H1 (cell line): ENCODE measurements at regions of chr12 and their contacts with region 1.

Region 1: DNA sequence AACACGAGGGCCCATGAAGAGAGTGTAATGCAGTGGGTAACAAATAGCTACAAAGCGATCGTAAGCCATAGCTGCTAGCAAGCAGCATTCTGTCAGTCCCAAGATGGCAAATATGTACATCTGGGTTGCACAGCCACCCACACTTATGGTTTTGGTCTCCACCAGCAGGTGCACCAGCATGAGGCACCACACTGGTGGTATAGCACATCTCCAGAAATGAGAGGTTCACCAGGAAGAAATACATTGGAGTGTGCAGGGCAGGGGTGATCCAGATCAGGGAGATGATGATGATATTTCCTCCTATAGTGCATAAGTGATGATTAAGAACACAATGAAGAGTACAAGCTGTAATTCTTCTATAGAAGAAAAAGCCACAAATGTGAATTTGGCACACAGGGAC is 26.4 kb upstream of the OR10A7 start:
- DNase-seq: no peak
- H3K4me3 ChIP-seq: no peak overlapping the region
- H3K27ac ChIP-seq: no peak overlapping the region
- H3K4me1 ChIP-seq: no peaks in the 10 kb centered on the region
- H3K27me3 ChIP-seq: no peaks in the 10 kb centered on the region
- CTCF ChIP-seq: no peak
- EP300 ChIP-seq: no peak
- POLR2A ChIP-seq: no peak
- RAD21 ChIP-seq: no peak

Region 2: GRCh38 chr12:54993161-54993835 is 201.1 kb before region 1 on chr12:
- CTCF ChIA-PET with region 1: no interaction called
- POLR2A ChIA-PET with region 1: no interaction called
- DNase-seq: peak in 1 of 2 experiments; percentile 55
- H3K4me3 ChIP-seq: no peak overlapping the region
- H3K27ac ChIP-seq: no peak overlapping the region
- H3K4me1 ChIP-seq: peaks cover 1 to 11% (median 7%) of the 10 kb centered on the region in 4 experiments; a peak in 5 of 7 replicates
- H3K27me3 ChIP-seq: no peaks in the 10 kb centered on the region
- CTCF ChIP-seq: peak in 2 of 3 experiments; percentile 75 to 88; a peak in 3 of 4 replicates
- EP300 ChIP-seq: no peak
- POLR2A ChIP-seq: no peak
- RAD21 ChIP-seq: peak; percentile 94 to 97

Region 3: GRCh38 chr12:55554296-55554695 is 359.9 kb after region 1 on chr12:
- CTCF ChIA-PET with region 1: no interaction called
- POLR2A ChIA-PET with region 1: no interaction called
- DNase-seq: no peak
- H3K4me3 ChIP-seq: no peak overlapping the region
- H3K27ac ChIP-seq: no peak overlapping the region
- H3K4me1 ChIP-seq: no peaks in the 10 kb centered on the region
- H3K27me3 ChIP-seq: no peaks in the 10 kb centered on the region
- CTCF ChIP-seq: no peak
- EP300 ChIP-seq: no peak
- POLR2A ChIP-seq: no peak
- RAD21 ChIP-seq: no peak

Region 4: GRCh38 chr12:55654511-55655214 is 460.3 kb after region 1 on chr12:
- CTCF ChIA-PET with region 1: interaction called, 15 read pairs
- POLR2A ChIA-PET with region 1: no interaction called
- DNase-seq: no peak
- H3K4me3 ChIP-seq: no peak overlapping the region
- H3K27ac ChIP-seq: no peak overlapping the region
- H3K4me1 ChIP-seq: peaks cover 0 to 2% (median 0%) of the 10 kb centered on the region in 4 experiments; a peak in 1 of 7 replicates
- H3K27me3 ChIP-seq: no peaks in the 10 kb centered on the region; a peak in 2 of 7 replicates
- CTCF ChIP-seq: no peak
- EP300 ChIP-seq: no peak
- POLR2A ChIP-seq: no peak
- RAD21 ChIP-seq: no peak